ENCODE measurements at regions of chr12 and their contacts with region 1.

Region 1: GRCh38 chr12:1795785-1796514 is 24.4 kb upstream of the LRTM2 start:
- DNase-seq: peak; percentile 83
- H3K4me3 ChIP-seq: peak overlapping the region; percentile 40 to 59
- H3K27ac ChIP-seq: peak overlapping the region; percentile 69 to 70
- H3K4me1 ChIP-seq: peaks cover 5% of the 10 kb centered on the region
- H3K27me3 ChIP-seq: no peaks in the 10 kb centered on the region
- CTCF ChIP-seq: peak; percentile 98 to 100 (median 100)
- POLR2A ChIP-seq: peak; percentile 58

Region 2: DNA sequence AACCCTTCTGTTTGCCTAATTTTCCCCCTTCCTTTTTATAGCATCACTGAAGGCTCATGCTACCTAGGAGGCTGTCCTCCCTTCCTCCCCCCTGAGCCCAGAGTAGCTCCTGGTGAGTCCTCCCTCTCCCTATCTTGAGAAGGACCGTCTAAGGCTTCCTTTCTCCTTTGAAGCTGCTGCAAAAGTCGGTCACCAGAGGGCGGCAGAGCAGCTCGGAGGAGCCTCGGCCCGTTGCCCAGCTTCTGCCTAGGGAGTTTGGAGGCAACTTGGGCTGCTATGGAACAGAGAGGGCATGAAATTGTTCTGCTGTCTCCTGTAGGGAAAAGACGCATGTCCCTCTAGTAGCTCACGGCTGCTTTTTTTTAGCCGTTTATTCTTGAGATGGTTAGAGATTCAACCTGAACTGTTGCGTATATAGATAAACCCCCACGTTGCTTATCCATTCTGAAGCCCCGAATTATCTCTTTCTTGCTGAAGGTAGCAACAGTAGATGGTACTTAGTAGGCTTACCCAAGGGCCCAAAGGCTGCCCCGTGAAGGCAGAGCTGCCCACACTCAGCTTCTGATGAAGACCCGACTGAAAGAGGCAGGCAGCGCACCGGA is 161.3 kb before region 1 on chr12:
- intact Hi-C with region 1: loop called (anchors 5 kb)
- DNase-seq: peak; percentile 67
- H3K4me3 ChIP-seq: no peak overlapping the region
- H3K27ac ChIP-seq: peak overlapping the region; percentile 17 to 26
- H3K4me1 ChIP-seq: peaks cover 8% of the 10 kb centered on the region
- H3K27me3 ChIP-seq: no peaks in the 10 kb centered on the region
- CTCF ChIP-seq: peak; percentile 9 to 77 (median 64)
- POLR2A ChIP-seq: no peak

Region 3: GRCh38 chr12:1661553-1662335 is 134.2 kb before region 1 on chr12:
- intact Hi-C with region 1: loop called (anchors 2 kb)
- DNase-seq: peak; percentile 82
- H3K4me3 ChIP-seq: peak overlapping the region; percentile 38 to 45
- H3K27ac ChIP-seq: peak overlapping the region; percentile 83 to 87
- H3K4me1 ChIP-seq: no peaks in the 10 kb centered on the region
- H3K27me3 ChIP-seq: no peaks in the 10 kb centered on the region
- CTCF ChIP-seq: no peak
- POLR2A ChIP-seq: peak; percentile 64

Region 4: DNA sequence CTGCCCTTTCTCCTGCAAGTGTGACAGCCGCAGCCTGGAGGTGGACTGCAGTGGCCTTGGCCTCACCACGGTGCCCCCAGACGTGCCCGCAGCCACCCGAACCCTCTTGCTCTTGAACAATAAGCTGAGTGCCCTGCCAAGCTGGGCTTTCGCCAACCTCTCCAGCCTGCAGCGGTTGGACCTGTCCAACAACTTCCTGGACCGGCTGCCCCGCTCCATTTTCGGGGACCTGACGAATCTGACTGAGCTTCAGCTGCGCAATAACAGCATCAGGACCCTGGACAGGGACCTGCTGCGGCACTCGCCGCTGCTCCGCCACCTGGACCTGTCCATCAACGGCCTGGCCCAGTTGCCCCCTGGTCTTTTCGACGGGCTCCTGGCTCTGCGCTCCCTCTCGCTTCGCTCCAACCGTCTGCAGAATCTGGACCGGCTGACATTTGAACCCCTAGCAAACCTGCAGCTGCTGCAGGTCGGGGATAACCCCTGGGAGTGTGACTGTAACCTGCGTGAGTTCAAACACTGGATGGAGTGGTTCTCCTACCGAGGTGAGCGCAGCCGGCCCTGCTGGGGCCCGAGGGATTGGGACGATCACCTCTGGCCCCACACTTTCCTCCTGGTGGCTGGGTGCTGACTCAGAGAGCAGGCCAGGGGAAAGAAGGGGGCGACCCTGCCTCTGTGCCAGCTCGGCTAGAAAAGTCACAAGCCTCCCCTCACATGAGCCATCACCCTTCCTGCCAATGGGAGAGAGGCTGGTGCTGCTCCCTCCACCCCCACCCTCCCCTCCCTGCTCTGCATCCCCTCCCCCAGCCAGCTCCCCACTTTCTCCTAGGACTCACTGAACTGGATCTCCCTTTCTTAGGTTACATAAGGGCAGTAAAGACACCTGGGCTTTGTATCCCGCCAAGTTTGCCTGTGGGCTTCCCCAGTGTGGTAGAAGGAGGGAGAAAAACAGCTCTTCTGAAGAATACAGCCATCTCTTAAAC is 35.3 kb after region 1 on chr12:
- intact Hi-C with region 1: no loop called
- DNase-seq: peak; percentile 90
- H3K4me3 ChIP-seq: no peak overlapping the region
- H3K27ac ChIP-seq: no peak overlapping the region
- H3K4me1 ChIP-seq: no peaks in the 10 kb centered on the region
- H3K27me3 ChIP-seq: no peaks in the 10 kb centered on the region
- CTCF ChIP-seq: no peak
- POLR2A ChIP-seq: no peak

Region 5: GRCh38 chr12:2034633-2035430 is 238.9 kb after region 1 on chr12:
- intact Hi-C with region 1: loop called (anchors 2 kb)
- DNase-seq: peak; percentile 83
- H3K4me3 ChIP-seq: peak overlapping the region; percentile 12 to 13
- H3K27ac ChIP-seq: no peak overlapping the region
- H3K4me1 ChIP-seq: peaks cover 5% of the 10 kb centered on the region
- H3K27me3 ChIP-seq: no peaks in the 10 kb centered on the region
- CTCF ChIP-seq: peak; percentile 86 to 95 (median 92)
- POLR2A ChIP-seq: peak; percentile 26

Region 6: DNA sequence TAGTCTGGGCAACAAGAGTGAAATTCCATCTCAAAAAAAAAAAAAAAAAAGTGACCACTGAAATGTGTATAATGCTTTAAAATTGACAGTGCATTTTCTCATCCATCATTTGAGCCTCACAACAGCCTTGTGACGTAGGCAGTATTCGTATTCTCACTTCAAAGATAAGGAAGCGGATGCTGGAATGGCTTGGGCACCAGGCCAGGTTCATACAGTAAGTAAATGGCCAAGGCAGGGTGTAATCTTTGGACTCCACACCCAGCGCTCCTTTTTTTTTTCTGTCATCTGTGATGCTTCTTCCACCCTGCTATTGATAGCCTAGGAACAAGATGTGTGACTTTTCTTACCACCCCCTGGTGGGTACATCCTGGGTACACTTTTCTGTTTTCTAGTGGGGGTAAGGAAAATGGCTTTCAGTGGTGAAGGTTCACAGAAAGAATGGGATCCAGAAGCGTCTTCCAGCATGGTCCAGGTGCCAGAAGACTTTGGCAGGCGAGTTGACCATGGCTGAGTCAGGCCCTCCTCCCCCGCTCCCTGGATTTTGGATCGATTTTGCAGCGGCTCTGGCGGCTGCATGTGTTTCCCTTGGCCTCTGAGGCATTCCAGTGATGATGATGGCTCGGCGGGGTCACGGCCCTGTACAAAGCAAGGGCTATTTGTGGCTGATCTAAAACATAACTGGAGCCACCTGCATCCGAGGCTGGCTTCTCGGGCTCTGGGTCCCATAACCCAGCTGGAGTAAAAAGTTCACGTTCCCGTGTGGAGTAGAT is 367.4 kb after region 1 on chr12:
- intact Hi-C with region 1: loop called (anchors 5 kb)
- DNase-seq: no peak
- H3K4me3 ChIP-seq: no peak overlapping the region
- H3K27ac ChIP-seq: peak overlapping the region in 1 of 2 donors; percentile 40
- H3K4me1 ChIP-seq: peaks cover 13% of the 10 kb centered on the region
- H3K27me3 ChIP-seq: no peaks in the 10 kb centered on the region
- CTCF ChIP-seq: no peak
- POLR2A ChIP-seq: no peak

Region 7: GRCh38 chr12:2583091-2583497 is 787.1 kb after region 1 on chr12:
- intact Hi-C with region 1: loop called (anchors 5 kb)
- DNase-seq: peak; percentile 36
- H3K4me3 ChIP-seq: no peak overlapping the region
- H3K27ac ChIP-seq: no peak overlapping the region
- H3K4me1 ChIP-seq: no peaks in the 10 kb centered on the region
- H3K27me3 ChIP-seq: no peaks in the 10 kb centered on the region
- CTCF ChIP-seq: peak; percentile 75 to 96 (median 87)
- POLR2A ChIP-seq: no peak